ENCODE measurements at regions of chr13 and their contacts with region 1.

Region 1: GRCh38 chr13:90956031-90956430 is 391.5 kb upstream of the MIR17HG start:
- DNase-seq: no peak

Region 2: GRCh38 chr13:90997951-90998350 is 41.9 kb after region 1 on chr13:
- intact Hi-C with region 1: no loop called
- DNase-seq: no peak

Region 3: GRCh38 chr13:91014696-91015095 is 58.7 kb after region 1 on chr13:
- intact Hi-C with region 1: loop called in 1 of 2 experiments (anchors 2 kb)
- DNase-seq: no peak

Region 4: DNA sequence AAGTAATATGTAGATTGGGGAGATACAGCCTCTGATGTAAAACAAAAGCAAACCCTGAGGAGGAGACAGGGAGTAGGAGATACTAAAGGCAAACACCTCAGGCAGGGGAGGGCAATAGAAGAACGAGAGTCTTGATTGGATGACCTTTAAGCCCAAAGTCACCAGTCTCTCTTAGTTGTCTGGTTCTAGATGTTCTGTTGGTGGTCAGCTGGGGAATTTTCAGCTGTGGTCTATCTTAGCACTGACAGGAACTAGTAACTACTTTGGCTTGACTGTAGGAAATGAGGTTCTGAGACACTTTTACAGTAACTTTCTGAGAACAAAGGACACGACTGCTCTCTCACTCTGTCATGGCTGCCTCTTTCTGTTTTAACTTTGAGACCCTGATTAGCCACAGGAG is 100.7 kb after region 1 on chr13:
- intact Hi-C with region 1: no loop called
- DNase-seq: no peak

Region 5: DNA sequence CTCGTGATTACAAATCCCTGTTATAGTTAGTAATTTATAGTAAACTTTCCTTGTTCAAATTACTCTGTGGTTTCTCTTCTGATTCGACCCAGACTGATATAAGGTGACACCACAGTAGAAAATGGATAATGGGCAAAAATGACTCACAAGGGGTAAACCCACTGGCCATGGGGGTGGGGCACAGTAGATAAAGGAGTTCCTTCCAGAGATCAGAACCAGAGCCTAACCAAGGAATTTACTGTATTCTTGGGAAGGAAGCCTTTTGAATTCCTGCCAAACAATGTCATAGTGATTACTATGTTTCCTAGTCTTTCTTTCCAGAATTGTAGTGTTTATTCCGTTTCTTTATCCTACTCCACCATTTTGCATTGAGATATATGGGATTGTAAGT is 413.4 kb after region 1 on chr13:
- intact Hi-C with region 1: no loop called
- DNase-seq: no peak

Region 6: GRCh38 chr13:91592056-91593014 is 636.3 kb after region 1 on chr13:
- intact Hi-C with region 1: loop called in 1 of 2 experiments (anchors 5 kb)
- DNase-seq: no peak

Measured in posterior vena cava (tissue), 2 donors.